Activated CD4-positive, alpha-beta T cell treated with anti-CD3 and anti-CD28 coated beads, Interleukin-2, amount 10 ng/mL, durations not matched to agents 24 days and 14 days (primary cell): ENCODE measurements at regions of chr5 and their contacts with region 1.

Region 1: GRCh38 chr5:140174465-140175366 is at the start of gene CYSTM1:
- DNase-seq: peak; percentile 99
- H3K4me3 Mint-ChIP-seq: peak within 1 kb of the TSS; percentile 95
- H3K27ac Mint-ChIP-seq: peak within 1 kb of the TSS; percentile 94
- H3K4me1 Mint-ChIP-seq: peaks cover 10% of the 10 kb centered on the region
- H3K27me3 Mint-ChIP-seq: peaks cover 19% of the 10 kb centered on the region
- total RNA-seq, gene CYSTM1: 17.2 and 17.3 TPM in 2 replicates

Region 2: DNA sequence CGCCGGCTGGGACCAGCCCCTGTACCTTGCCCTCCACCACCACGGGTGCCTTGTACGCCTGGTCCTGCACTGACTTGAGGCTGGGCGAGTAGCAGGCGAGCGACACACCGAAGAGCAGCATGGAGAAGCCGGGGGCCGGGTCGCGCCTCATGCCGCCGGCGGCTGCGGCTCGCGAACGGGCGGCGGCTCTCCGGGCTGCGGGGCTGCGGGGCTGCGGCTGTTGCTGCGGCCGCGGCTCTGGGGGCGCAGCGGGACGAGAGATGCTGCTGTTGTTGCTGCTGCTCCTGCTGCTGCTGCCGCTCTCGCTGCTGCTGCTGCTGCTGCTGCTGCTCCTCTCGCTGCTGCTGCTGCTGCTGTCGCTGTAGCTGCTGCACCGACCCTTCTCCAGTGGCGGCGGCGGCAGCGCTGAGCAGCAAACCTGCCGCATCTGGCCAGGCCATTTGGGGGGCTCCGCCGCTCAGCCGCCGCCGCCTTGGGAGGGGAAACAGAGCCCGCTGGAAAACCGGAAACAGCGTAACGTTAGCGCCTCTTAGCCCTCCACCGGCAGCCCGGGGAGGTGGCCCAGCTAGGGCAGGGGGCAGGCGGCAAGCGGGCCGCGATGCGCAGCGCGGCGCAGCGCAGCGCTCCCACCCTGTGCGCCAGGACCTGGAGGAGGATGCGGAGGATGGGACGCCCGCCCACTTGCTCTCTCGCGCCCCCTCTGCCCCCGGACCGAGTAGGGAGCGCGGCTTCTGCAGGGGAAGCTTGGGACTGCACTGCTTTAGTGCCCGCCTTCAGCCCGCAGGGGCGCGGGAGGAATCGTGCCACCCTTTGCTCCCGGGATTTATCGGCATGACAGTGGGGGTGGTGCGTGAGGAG is 131.8 kb before region 1 on chr5 and contains the start of gene NRG2:
- intact Hi-C with region 1: no loop called
- DNase-seq: peak; percentile 78
- H3K4me3 Mint-ChIP-seq: peak within 1 kb of the TSS; percentile 73
- H3K27ac Mint-ChIP-seq: no peak within 1 kb of the TSS
- H3K4me1 Mint-ChIP-seq: peaks cover 10% of the 10 kb centered on the region
- H3K27me3 Mint-ChIP-seq: peaks cover 66% of the 10 kb centered on the region
- total RNA-seq, gene NRG2: 0.07 TPM in 2 replicates

Region 3: DNA sequence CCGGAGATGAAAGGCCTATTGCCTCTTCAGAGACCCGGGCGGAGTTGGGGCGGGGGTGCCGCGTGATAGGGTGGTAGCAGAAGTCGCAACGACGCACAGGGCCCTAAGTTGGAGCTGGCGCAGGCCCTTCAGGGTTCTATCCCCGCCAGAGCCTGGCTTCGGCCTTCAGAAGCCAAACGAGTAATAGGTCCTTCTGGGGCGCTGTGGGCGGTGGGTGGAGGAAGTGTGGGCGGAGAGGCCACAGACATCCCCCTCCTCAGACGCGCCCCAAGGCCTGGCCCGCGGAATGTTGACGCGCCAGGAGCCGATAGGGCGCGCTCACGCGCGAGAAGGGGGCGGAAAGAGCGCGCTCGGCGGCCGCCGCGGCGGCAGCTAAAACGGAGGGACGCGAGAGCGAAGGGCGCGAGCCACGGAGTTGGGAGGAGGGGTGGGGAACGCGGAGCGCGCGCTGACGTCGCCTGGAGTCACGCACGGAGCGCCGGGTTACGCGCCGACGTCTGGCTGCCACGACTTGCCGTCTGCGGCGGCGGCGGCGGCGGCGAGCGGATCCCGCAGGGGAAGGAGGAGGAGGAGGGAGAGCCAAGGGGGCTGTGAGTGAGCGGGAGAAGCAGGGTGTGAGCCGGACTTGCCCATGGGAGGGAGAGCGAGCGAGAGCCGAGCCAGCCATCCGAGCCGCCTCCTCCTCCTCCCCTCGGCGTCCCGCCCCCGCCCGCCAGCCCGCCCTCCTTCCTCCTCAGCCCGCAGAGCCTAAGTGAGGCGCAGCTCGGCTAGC is 67.2 kb before region 1 on chr5:
- intact Hi-C with region 1: loop called (anchors 1 kb)
- DNase-seq: peak; percentile 97
- H3K4me3 Mint-ChIP-seq: peak overlapping the region; percentile 98
- H3K27ac Mint-ChIP-seq: peak overlapping the region; percentile 96
- H3K4me1 Mint-ChIP-seq: peaks cover 32% of the 10 kb centered on the region
- H3K27me3 Mint-ChIP-seq: peaks cover 61% of the 10 kb centered on the region

Region 4: GRCh38 chr5:140346348-140347101 is 171.8 kb after region 1 on chr5 and contains the start of gene HBEGF:
- intact Hi-C with region 1: loop called (anchors 2 kb)
- DNase-seq: peak; percentile 89
- H3K4me3 Mint-ChIP-seq: peak within 1 kb of the TSS; percentile 89
- H3K27ac Mint-ChIP-seq: peak within 1 kb of the TSS; percentile 78
- H3K4me1 Mint-ChIP-seq: peaks cover 61% of the 10 kb centered on the region
- H3K27me3 Mint-ChIP-seq: peaks cover 6% of the 10 kb centered on the region
- total RNA-seq, gene HBEGF: 21.9 and 22.5 TPM in 2 replicates

Region 5: GRCh38 chr5:140557136-140557805 is 382.6 kb after region 1 on chr5 and contains the start of gene SRA1:
- intact Hi-C with region 1: loop called (anchors 10 kb)
- DNase-seq: peak; percentile 98
- H3K4me3 Mint-ChIP-seq: peak within 1 kb of the TSS; percentile 84
- H3K27ac Mint-ChIP-seq: peak within 1 kb of the TSS; percentile 82
- H3K4me1 Mint-ChIP-seq: peaks cover 47% of the 10 kb centered on the region
- H3K27me3 Mint-ChIP-seq: no peaks in the 10 kb centered on the region
- total RNA-seq, gene SRA1: 53.8 and 54.9 TPM in 2 replicates